Left colon (tissue), 2 donors: ENCODE measurements at regions of chr17 and their contacts with region 1.

Region 1: GRCh38 chr17:48024937-48025906 is 12.4 kb downstream of the COPZ2 start:
- DNase-seq: peak; percentile 97 to 99
- ATAC-seq: peak; percentile 79

Region 2: DNA sequence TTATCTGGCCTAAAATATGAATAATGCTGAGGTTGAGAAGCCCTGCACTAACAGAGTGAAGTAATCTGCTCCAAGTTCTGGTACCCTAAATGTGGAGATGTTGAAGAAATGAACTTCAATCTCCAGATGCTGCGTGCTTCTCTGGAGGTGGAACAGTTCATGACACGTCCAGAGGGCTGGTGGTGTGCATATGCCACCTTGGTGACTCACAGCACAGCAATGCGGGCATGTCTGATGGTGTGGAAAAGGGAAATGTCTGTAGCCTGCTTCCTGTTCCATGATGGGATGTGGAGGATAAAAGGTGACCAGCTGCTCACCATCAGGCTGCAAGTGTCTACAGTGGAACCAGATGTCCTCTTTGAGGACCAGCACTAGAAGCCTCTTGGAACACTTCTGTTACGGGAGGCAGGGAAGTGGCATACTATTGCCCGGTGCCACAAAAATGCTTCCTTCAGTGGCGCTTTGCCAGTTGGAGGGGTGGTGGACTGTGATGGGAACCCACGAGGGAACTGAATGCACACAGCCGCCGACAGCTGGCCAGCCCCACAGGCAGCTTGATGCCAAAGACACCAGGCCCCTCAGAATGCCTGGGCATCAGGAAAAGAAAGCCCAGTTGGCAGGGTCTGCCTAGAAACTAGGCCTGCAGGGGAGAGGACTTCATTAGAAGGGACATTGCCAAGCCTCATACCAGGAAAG is 102.3 kb after region 1 on chr17:
- intact Hi-C with region 1: loop called (anchors 5 kb)
- DNase-seq: no peak
- ATAC-seq: peak; percentile 52